Tibial artery (tissue), 4 donors: ENCODE measurements at regions of chr12 and their contacts with region 1.

Region 1: GRCh38 chr12:119198421-119198820 is 19.7 kb downstream of the HSPB8 start:
- DNase-seq: no peak
- H3K4me3 ChIP-seq: no peak overlapping the region
- H3K27ac ChIP-seq: peak overlapping the region in 1 of 2 donors; percentile 29
- H3K4me1 ChIP-seq: peaks cover 0 to 10% (median 0%) of the 10 kb centered on the region in 4 donors
- H3K27me3 ChIP-seq: no peaks in the 10 kb centered on the region
- CTCF ChIP-seq: no peak

Region 2: GRCh38 chr12:119020406-119021360 is 177.7 kb before region 1 on chr12:
- intact Hi-C with region 1: no loop called
- DNase-seq: no peak
- H3K4me3 ChIP-seq: no peak overlapping the region
- H3K27ac ChIP-seq: no peak overlapping the region
- H3K4me1 ChIP-seq: no peaks in the 10 kb centered on the region
- H3K27me3 ChIP-seq: peaks cover 0 to 21% of the 10 kb centered on the region in 2 donors
- CTCF ChIP-seq: no peak

Region 3: DNA sequence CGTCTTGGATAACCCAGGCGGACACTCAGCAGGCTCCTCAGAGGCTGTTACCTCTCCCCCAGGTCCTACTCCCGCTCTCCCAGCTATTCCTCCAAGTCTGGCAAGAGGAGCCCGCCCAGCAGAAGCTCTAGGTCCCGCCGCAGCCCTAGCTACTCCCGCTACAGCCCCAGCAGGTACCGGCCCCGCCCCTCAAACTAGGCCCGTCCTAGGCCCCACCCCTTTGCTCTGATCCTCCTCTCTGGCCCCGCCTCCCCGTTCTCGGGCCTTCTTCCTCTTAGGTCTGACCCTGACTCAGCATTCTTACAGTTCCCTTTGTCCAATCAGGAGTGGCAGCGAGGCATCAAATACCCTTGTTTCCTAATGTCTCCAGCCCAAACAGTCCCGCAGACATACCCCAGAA is 44.9 kb before region 1 on chr12:
- intact Hi-C with region 1: loop called (anchors 5 kb)
- DNase-seq: peak; percentile 45 to 89
- H3K4me3 ChIP-seq: peak overlapping the region; percentile 18 to 30
- H3K27ac ChIP-seq: peak overlapping the region; percentile 29 to 60
- H3K4me1 ChIP-seq: peaks cover 0 to 53% (median 25%) of the 10 kb centered on the region in 4 donors
- H3K27me3 ChIP-seq: no peaks in the 10 kb centered on the region
- CTCF ChIP-seq: no peak

Region 4: DNA sequence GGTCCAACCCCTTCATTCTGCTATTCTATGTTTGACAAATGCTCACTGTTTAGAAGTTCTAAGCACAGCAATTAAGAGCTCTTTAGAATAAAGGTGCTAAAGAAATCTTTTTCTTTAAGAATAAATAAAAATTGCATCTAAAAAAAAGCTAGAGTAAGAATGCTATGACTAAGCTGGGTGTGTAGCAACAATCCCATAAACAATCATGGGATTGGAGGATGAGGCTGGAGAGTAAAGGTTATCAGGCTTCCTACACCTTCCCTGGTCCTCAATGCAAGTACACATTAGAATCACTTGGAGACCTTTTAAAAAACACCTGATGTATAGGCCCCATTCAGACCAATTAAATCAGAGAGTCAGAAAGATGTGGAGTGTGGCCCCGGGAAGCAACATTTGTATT is 590.4 kb after region 1 on chr12:
- intact Hi-C with region 1: no loop called
- DNase-seq: no peak
- H3K4me3 ChIP-seq: no peak overlapping the region
- H3K27ac ChIP-seq: no peak overlapping the region
- H3K4me1 ChIP-seq: no peaks in the 10 kb centered on the region
- H3K27me3 ChIP-seq: no peaks in the 10 kb centered on the region
- CTCF ChIP-seq: no peak